ENCODE measurements at regions of chr15 and their contacts with region 1.

Region 1: GRCh38 chr15:45522328-45523160 is at the start of gene SLC30A4:
- DNase-seq: peak; percentile 76
- ATAC-seq: peak; percentile 86
- H3K4me3 Mint-ChIP-seq: peak within 1 kb of the TSS; percentile 90
- H3K27ac Mint-ChIP-seq: peak within 1 kb of the TSS; percentile 83
- H3K4me1 Mint-ChIP-seq: peaks cover 42% of the 10 kb centered on the region
- H3K27me3 Mint-ChIP-seq: no peaks in the 10 kb centered on the region
- CTCF ChIP-seq: no peak
- total RNA-seq, gene SLC30A4: 3.7 and 3.9 TPM in 2 replicates

Region 2: DNA sequence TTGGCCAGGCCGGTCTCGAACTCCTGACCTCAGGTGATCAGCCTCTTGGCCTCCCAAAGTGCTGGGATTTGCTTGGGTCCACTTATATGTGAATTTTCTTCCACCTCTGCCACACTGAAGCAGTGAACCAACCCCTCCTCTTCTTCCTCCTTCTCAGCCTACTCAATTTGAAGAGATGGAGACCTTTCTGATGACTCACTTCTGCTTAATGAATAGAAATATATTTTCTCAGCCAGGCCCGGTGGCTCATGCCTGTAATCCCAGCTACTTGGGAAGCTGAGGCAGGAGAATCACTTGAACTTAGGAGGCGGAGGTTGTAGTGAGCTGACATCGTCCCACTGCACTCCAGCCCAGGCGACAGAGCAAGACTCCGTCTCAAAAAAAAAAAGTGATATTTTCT is 97.4 kb before region 1 on chr15:
- CTCF ChIA-PET with region 1: no interaction called
- POLR2A ChIA-PET with region 1: no interaction called
- intact Hi-C with region 1: no loop called
- DNase-seq: no peak
- ATAC-seq: no peak
- H3K4me3 Mint-ChIP-seq: no peak overlapping the region
- H3K27ac Mint-ChIP-seq: no peak overlapping the region
- H3K4me1 Mint-ChIP-seq: peaks cover 1% of the 10 kb centered on the region
- H3K27me3 Mint-ChIP-seq: no peaks in the 10 kb centered on the region
- CTCF ChIP-seq: no peak

Region 3: DNA sequence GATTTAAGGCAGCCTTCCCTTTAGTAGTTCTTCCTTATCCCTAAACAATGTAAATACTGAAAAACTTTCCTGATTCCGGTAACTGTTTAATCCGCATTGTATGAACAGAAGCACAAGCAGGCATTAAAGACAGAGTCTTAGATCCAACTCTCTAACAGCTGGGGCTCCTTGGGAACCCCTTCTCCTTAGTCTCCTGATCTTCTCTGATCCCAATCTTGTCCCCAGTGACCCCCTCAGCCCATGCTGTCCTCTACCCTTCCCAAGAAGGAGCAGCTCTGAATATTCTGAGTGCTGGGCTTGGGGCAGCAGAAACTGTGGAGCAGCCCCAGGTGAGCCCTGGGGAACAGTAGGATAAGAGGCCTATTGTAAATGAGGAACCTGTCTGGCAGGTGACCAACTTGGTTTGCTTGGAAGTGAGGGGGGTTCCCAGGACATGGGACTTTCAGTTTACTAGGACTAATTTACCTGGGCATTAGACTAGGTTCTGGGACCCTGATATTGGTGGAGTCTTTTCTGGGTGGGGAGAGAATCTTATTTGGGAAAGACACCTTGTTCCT is 13.0 kb after region 1 on chr15:
- CTCF ChIA-PET with region 1: no interaction called
- POLR2A ChIA-PET with region 1: no interaction called
- intact Hi-C with region 1: no loop called
- DNase-seq: no peak
- ATAC-seq: no peak
- H3K4me3 Mint-ChIP-seq: no peak overlapping the region
- H3K27ac Mint-ChIP-seq: no peak overlapping the region
- H3K4me1 Mint-ChIP-seq: no peaks in the 10 kb centered on the region
- H3K27me3 Mint-ChIP-seq: peaks cover 5% of the 10 kb centered on the region
- CTCF ChIP-seq: no peak

Region 4: GRCh38 chr15:45573961-45574629 is 51.6 kb after region 1 on chr15:
- CTCF ChIA-PET with region 1: no interaction called
- POLR2A ChIA-PET with region 1: no interaction called
- intact Hi-C with region 1: loop called (anchors 5 kb)
- DNase-seq: no peak
- ATAC-seq: peak; percentile 40
- H3K4me3 Mint-ChIP-seq: no peak overlapping the region
- H3K27ac Mint-ChIP-seq: no peak overlapping the region
- H3K4me1 Mint-ChIP-seq: peaks cover 26% of the 10 kb centered on the region
- H3K27me3 Mint-ChIP-seq: no peaks in the 10 kb centered on the region
- CTCF ChIP-seq: no peak

Measured in activated B cell treated with CpG ODN at 0.5 μM for 24 hours (primary cell).